PC-9 (cell line): ENCODE measurements at regions of chr11 and their contacts with region 1.

Region 1: DNA sequence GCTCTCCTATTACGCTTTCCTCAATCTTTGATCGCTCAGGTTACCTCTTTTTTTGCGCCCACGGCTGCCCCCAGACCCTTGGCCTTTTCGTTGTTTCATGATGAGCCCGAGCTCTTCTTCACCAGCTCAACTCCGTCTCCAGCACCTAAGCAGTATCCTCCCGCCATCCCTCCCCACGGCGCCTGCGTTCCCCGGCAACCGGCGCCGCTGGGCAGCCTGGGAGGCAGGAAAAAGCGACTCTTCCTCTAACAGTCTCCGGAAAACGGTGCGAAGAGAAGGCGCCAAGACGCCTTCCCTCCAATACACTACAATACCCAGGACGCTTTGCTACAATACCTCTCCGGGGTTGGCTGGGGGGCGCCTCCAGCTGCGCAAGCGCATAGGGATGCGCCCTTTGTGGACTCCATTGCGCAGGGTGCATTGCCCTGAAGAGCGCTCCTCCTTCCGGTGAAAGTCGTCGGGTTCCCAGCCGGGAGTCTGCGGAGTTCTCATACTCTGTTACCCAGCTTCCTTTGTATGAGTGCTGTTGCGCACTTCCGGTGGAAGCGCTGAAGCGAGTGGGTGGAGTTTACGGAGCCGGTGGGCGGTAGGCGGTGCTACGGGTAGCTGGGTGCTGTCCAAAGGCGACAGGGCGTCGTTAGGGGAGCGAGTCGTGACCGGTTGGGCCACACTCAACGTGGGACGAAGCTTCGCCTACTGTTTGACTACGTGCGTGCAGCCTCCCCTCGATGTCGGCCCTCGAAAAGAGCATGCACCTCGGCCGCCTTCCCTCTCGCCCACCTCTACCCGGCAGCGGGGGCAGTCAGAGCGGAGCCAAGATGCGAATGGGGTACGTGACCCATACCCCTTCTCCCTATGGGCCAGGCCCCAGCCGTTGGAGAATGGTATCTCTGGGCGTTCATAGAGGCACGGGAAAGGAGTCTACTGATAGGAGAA is at the starts of genes C2CD3 and PPME1:
- DNase-seq: peak; percentile 99 to 100
- H3K4me3 ChIP-seq: peak within 1 kb of the TSS; percentile 84
- H3K27ac ChIP-seq: peak within 1 kb of the TSS; percentile 73
- H3K4me1 ChIP-seq: peaks cover 40% of the 10 kb centered on the region
- H3K27me3 ChIP-seq: no peaks in the 10 kb centered on the region
- CTCF ChIP-seq: no peak; the same call in 1 of the 2 replicates
- total RNA-seq, gene C2CD3: 47.6 and 50.0 TPM in 2 replicates
- total RNA-seq, gene PPME1: 81.0 and 86.8 TPM in 2 replicates

Region 2: DNA sequence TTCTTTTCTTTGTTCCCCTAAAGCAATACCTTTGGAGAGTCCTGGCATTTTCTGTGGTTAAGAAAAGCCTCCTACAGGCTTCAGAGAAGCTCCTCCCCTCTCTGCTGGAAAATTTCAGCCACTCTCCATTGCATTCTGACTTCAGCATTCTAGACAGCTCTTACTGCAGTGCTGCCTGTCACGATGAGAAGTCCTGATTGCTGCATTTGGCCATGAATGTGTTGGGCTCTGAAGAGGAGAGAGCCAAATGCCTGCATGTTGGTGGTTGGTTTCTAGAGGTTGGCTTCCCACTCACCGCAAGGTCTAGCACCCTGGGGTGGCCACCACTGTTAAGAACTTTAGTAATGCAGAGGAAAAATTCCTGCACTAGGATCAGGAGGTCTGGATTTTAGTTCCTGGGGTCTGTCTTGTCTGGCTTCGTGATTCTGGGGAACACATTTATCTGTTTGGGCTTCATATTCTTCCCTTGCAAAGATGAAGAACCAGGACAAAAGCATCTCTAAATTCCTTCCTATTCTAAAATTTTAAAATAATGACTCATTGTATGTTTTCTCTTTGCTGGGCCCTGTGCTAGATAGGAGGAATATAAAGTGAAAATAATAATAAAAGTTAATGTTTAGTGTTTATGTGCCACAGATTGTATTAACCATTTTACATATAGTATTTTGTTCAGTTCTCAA is 332.4 kb before region 1 on chr11:
- CTCF ChIA-PET with region 1: no interaction called
- POLR2A ChIA-PET with region 1: no interaction called
- intact Hi-C with region 1: no loop called
- DNase-seq: no peak
- H3K4me3 ChIP-seq: no peak overlapping the region
- H3K27ac ChIP-seq: no peak overlapping the region
- H3K4me1 ChIP-seq: no peaks in the 10 kb centered on the region
- H3K27me3 ChIP-seq: no peaks in the 10 kb centered on the region
- CTCF ChIP-seq: no peak

Region 3: DNA sequence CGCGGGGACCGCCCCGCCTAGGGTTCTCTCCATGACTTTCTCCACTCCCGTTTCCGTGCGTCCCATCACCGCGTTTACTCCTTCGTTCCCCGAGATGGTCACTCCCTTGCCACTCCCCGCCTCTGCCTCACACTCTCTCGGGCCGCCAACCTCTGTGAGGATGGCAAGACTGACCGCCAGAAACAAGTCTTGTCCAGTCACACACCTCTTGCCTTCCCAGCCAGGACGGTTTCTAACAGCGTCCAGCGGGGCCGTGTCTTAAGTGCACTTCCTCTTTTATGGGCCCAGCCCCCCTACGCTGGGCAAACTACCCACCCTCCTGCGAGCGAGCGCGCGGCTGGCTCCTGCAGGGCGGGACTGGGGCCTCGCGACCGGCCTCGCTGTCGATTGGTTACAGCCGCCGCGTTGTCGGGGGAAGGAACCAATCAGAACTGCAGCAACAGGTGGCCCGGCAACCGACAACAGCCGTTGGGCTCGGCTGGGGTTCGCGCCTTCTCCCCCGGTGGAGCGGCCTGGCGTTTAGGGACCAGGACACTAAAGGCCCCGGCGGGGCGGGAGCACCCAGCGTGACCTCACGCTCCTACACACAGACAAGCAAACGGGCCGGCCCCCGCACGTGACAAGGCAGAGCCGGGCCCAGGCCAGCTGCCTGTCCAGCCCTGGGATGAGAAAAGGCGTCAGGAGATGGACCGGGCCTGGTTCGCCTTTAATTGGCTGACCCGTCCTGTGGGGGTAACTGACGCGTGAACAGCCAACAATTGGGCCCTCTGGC is 187.8 kb before region 1 on chr11:
- CTCF ChIA-PET with region 1: no interaction called
- POLR2A ChIA-PET with region 1: interaction called, 3 read pairs
- intact Hi-C with region 1: loop called (anchors 1 kb)
- DNase-seq: peak; percentile 90 to 96
- H3K4me3 ChIP-seq: peak overlapping the region; percentile 70
- H3K27ac ChIP-seq: peak overlapping the region; percentile 73
- H3K4me1 ChIP-seq: peaks cover 36% of the 10 kb centered on the region
- H3K27me3 ChIP-seq: no peaks in the 10 kb centered on the region
- CTCF ChIP-seq: no peak

Region 4: DNA sequence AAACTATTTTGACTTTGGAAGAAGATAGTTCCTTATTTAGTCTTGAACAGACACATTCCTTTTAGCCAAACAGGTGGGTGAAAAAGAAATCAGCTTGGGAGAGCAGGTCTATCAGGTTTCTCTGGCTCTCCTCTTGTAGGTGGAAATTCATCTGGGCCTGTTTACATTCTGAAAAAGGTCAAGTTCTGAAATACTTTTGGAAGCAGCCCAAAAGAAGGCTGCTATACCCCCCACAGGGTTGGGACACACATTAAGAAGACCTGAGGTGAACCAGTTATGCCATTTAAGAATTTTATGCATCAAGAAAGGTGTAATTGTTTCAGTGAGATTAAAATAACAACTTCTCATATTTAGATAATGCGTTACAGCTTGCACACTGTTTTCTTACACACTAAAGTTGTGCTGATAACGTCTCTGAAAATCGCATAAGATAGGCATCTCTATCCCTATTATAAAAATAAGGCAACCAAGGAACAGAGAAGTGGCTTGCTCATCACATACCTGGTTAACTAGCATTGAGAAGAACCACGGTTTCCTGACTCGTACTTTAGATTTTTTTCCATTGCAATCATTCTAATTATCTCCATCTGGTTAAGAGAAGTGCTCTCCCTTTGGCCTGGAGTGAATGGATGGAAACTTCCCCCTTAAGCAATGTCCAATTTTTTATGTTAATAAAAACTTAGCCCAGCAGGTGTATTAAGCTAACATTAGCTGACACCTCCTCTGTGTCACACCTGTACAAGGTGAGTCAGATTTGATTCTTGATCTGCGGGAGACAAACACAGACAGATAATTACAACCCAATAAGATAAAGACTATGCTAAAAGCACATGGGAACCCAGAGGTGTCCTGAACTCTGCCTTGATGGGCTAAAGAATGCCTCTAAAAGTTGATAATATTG is 101.6 kb before region 1 on chr11:
- CTCF ChIA-PET with region 1: no interaction called
- POLR2A ChIA-PET with region 1: interaction called, 6 read pairs
- intact Hi-C with region 1: loop called (anchors 5 kb)
- DNase-seq: peak; percentile 69 to 100
- H3K4me3 ChIP-seq: peak overlapping the region; percentile 11; the same call in 1 of the 2 replicates
- H3K27ac ChIP-seq: peak overlapping the region; percentile 94
- H3K4me1 ChIP-seq: peaks cover 75% of the 10 kb centered on the region
- H3K27me3 ChIP-seq: no peaks in the 10 kb centered on the region
- CTCF ChIP-seq: no peak

Region 5: DNA sequence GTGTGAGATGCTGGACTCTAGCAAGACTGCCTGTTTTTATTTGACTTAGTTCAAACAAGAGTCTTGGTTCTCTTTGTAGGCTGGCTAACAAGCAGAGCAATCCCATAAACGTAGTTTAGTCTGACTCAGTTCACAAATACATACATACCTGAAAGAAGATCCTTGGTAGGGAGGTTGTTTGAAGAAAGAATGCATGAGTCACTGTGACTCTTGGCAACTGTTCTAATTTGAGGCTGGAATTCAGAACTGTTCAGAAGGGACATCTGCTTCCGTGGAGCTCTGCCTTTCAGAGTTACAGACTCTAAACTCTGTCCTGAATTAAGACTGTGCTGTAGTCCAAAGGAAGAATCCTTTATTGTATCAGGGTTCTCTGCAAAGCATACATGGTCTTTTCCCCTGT is 32.4 kb before region 1 on chr11:
- CTCF ChIA-PET with region 1: no interaction called
- POLR2A ChIA-PET with region 1: interaction called, 24 read pairs
- intact Hi-C with region 1: loop called (anchors 1 kb)
- DNase-seq: peak; percentile 67 to 99
- H3K4me3 ChIP-seq: peak overlapping the region; percentile 19; the same call in 1 of the 2 replicates
- H3K27ac ChIP-seq: peak overlapping the region; percentile 91
- H3K4me1 ChIP-seq: peaks cover 45% of the 10 kb centered on the region
- H3K27me3 ChIP-seq: no peaks in the 10 kb centered on the region
- CTCF ChIP-seq: no peak

Region 6: GRCh38 chr11:74388678-74389327 is 217.8 kb after region 1 on chr11:
- CTCF ChIA-PET with region 1: no interaction called
- POLR2A ChIA-PET with region 1: interaction called, 18 read pairs
- intact Hi-C with region 1: no loop called
- DNase-seq: no peak
- H3K4me3 ChIP-seq: no peak overlapping the region
- H3K27ac ChIP-seq: no peak overlapping the region
- H3K4me1 ChIP-seq: no peaks in the 10 kb centered on the region
- H3K27me3 ChIP-seq: no peaks in the 10 kb centered on the region
- CTCF ChIP-seq: no peak